ENCODE measurements at regions of chr9 and their contacts with region 1.

Region 1: DNA sequence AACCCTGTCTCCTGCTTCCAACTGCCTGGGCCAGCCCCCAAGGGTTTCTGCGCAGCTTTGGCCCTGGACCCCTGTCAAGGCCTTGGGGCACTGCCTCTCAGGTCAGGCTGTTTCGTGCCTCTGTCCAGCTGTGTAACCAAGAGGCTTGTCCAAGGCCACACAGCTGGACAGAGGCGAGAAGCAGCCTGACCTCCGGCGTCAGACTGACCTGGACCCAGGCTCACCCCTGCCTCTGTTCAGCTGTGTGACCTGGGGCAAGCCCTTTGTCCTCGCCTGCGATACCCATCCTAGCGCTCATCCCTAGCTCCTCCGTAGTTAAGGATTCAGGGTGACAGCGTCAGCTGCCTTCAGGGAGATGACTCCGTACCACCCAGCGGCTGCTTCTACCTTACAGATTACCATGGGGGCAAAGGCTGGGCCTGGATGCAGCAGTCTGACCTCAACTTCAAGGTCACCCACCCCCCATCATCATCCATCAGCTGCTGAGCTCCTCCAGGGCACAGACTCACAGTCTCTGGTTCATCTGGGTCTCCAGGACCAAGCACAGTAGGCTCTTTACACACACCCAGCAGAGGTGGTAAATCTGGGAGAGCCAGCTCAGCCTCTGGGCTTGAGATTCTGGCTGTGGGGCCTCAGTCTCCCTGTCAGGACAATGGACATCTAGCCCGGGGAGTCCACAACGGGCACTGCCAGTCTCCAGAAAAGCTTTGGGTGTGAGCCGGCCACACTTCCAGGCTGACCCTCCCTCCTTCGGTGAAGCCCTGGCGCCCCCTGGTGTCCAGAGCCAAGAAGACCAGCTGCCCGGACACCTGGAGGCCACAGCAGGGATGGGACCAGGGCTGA is 7.9 kb downstream of the AK1 start:
- DNase-seq: peak; percentile 81 to 96
- ATAC-seq: peak; percentile 88 to 97
- H3K4me3 ChIP-seq: no peak overlapping the region
- H3K27ac ChIP-seq: peak overlapping the region in 1 of 2 experiments; percentile 45; a peak in 1 of 6 replicates
- H3K4me1 ChIP-seq: peaks cover 7% of the 10 kb centered on the region
- CTCF ChIP-seq: peak; percentile 82
- EP300 ChIP-seq: no peak
- POLR2A ChIP-seq: no peak
- RAD21 ChIP-seq: peak; percentile 89 to 96

Region 2: DNA sequence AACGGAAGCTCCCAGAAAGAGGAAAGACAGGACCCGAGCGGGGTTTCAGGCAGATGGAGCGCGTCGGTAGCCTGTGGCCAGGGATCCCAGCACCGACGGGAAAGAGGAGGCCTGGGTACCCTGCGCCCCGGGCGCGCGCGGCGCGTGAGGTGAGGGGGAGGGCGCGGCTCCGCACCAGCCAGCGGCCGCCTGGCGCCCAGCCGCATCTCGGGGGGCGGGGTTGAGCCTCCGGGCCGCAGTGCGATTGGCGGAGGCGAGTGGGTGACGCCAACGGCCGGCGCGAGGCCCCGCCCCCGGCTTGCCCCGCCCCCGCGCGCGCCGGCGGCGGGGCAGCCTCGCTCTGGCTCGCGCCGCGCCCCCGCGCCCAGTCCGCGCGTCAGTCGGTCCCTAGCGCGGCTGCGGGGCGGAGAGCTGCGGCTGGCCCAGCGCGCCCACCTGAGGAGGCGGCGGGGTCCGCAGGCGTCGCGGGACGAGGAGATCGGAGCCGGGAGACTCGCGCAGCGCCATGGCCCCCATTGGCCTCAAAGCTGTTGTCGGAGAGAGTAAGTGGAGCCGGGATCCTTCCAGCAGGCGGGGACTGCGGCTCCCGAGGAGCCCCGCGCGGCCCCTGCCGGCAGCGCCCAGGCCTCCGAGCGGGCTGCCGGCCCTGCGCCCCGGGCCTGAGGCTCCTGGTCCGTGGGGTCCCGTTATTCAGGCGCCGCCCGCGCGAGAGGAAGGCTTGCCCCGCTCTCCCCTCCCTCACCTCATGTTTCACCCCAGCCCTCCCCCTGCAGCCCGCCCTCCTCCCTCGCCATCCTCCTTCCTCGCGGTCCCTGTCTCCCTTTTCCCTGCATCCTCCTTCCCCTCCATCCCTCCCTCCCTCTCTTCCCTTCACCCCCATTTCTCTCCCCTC is 257.4 kb before region 1 on chr9 and contains the start of gene STXBP1:
- CTCF ChIA-PET with region 1: interaction called, 10 read pairs
- POLR2A ChIA-PET with region 1: interaction called, 3 read pairs
- DNase-seq: peak; percentile 81 to 84
- ATAC-seq: peak; percentile 72 to 74
- H3K4me3 ChIP-seq: peak within 1 kb of the TSS; percentile 77
- H3K27ac ChIP-seq: peak within 1 kb of the TSS; percentile 73 to 96
- H3K4me1 ChIP-seq: peaks cover 23% of the 10 kb centered on the region
- CTCF ChIP-seq: 0 out of 3 replicates have a peak, but pooled peaks have one; percentile 10
- EP300 ChIP-seq: no peak
- POLR2A ChIP-seq: peak; percentile 59
- RAD21 ChIP-seq: no peak
- polyA plus RNA-seq, gene STXBP1: 13.3 and 20.4 TPM in 2 replicates

Region 3: GRCh38 chr9:127754099-127755050 is 115.2 kb before region 1 on chr9:
- CTCF ChIA-PET with region 1: interaction called, 12 read pairs
- POLR2A ChIA-PET with region 1: no interaction called
- DNase-seq: peak; percentile 38 to 82
- ATAC-seq: peak; percentile 78 to 93; a peak in 5 of 6 replicates
- H3K4me3 ChIP-seq: peak overlapping the region; percentile 45
- H3K27ac ChIP-seq: peak overlapping the region in 1 of 2 experiments; percentile 54; a peak in 2 of 6 replicates
- H3K4me1 ChIP-seq: peaks cover 14% of the 10 kb centered on the region
- CTCF ChIP-seq: no peak
- EP300 ChIP-seq: no peak
- POLR2A ChIP-seq: no peak
- RAD21 ChIP-seq: no peak

Region 4: GRCh38 chr9:127796899-127797370 is 72.6 kb before region 1 on chr9:
- CTCF ChIA-PET with region 1: interaction called, 18 read pairs
- POLR2A ChIA-PET with region 1: interaction called, 3 read pairs
- DNase-seq: no peak
- ATAC-seq: no peak; a peak in 1 of 6 replicates
- H3K4me3 ChIP-seq: no peak overlapping the region
- H3K27ac ChIP-seq: no peak overlapping the region
- H3K4me1 ChIP-seq: peaks cover 33% of the 10 kb centered on the region
- CTCF ChIP-seq: no peak
- EP300 ChIP-seq: no peak
- POLR2A ChIP-seq: no peak
- RAD21 ChIP-seq: no peak

Region 5: DNA sequence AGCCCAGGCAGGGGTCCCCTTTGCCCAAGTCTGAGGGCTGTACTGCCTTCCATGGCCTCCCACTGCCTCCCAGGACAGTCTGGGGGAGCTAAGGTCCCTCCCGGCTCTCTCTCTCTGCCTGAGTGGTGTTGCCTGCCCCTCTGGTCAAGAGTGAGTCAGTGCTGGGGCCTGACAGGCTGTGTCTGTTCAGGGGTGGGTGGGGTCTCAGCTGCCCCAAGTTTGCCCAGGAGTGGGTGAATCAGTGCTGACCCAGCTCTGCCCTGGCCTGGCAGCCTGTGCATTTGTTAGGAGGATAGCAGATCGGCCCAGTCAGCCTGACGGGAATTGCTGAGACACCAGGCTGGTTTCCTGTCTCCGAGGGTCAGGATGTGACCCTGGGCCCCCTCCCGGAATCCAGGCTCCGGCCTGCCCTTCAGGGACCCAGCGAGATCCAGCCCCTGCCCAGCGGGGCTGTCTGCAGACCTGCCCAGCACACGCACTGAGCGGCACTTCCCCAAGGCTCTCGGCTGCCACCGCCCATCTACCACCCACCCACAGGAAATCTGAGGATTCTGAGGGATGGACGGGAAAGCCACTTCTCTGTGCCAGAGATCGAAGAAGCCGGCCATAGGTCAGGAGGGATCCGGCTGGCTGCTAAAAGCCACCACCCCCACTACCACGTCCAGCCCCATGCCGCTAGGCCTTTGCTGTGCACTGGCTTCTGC is 31.0 kb before region 1 on chr9:
- CTCF ChIA-PET with region 1: interaction called, 60 read pairs
- POLR2A ChIA-PET with region 1: no interaction called
- DNase-seq: peak; percentile 26 to 51
- ATAC-seq: peak; percentile 72 to 92
- H3K4me3 ChIP-seq: no peak overlapping the region
- H3K27ac ChIP-seq: peak overlapping the region; percentile 33 to 68; a peak in 4 of 6 replicates
- H3K4me1 ChIP-seq: peaks cover 12% of the 10 kb centered on the region; the same call in 2 of the 3 replicates
- CTCF ChIP-seq: no peak
- EP300 ChIP-seq: no peak
- POLR2A ChIP-seq: no peak
- RAD21 ChIP-seq: no peak

Region 6: DNA sequence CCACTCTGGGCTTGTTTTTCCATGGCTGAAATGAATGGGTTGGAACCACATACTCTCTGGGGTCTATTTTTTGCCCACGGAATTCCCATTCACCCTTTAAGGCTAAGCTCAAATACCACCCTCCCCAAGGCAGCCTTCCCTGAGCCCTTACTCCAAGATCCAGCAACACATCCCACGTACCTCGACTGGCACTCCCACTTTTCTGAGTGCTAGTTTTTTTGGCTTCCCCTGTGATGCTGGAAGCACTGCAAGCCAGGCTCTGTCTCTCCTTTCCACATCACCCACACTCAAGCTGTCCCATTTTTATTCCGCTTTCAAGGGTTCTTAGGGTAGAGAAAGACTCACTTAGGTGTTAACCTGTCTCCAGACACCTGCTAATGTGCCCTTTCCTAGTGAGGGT is 23.9 kb after region 1 on chr9:
- CTCF ChIA-PET with region 1: interaction called, 50 read pairs
- POLR2A ChIA-PET with region 1: no interaction called
- DNase-seq: no peak
- ATAC-seq: no peak
- H3K4me3 ChIP-seq: no peak overlapping the region
- H3K27ac ChIP-seq: no peak overlapping the region
- H3K4me1 ChIP-seq: 0 out of 3 replicates have a peak, but pooled peaks cover 2% of the 10 kb centered on the region
- CTCF ChIP-seq: no peak
- EP300 ChIP-seq: no peak
- POLR2A ChIP-seq: no peak
- RAD21 ChIP-seq: no peak

Region 7: DNA sequence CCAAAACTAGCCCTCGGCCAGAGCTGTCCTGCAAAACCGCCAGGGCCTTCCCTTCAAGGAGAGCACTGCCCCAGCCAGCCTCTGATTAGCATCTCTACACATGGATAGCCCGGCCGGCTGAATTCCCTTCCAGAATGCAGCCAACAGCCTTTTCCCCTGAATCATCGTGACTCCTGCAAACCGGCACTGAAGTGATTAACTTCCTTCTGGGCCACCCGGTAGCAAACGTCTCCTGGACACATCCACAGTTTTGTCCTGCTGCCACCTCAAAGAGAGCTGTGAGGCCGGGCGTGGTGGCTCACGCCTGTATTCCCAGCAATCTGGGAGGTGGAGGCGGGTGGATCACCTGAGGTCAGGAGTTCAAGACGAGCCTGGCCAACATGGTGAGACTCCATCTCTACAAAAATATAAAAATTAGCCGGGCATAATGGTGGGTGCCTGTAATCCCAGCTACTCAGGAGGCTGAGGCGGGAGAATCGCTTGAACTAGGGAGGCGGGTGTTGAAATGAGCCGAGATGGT is 132.3 kb after region 1 on chr9:
- CTCF ChIA-PET with region 1: no interaction called
- POLR2A ChIA-PET with region 1: no interaction called
- DNase-seq: peak; percentile 80 to 96
- ATAC-seq: peak; percentile 94 to 97
- H3K4me3 ChIP-seq: no peak overlapping the region
- H3K27ac ChIP-seq: peak overlapping the region; percentile 90 to 91
- H3K4me1 ChIP-seq: peaks cover 42% of the 10 kb centered on the region
- CTCF ChIP-seq: no peak
- EP300 ChIP-seq: peak; percentile 29 to 53; a peak in 2 of 5 replicates
- POLR2A ChIP-seq: peak; percentile 19; the same call in 1 of the 2 replicates
- RAD21 ChIP-seq: peak in 1 of 2 experiments; percentile 35; a peak in 2 of 5 replicates

Region 8: GRCh38 chr9:128455849-128456612 is 586.5 kb after region 1 on chr9 and contains the start of gene ODF2:
- CTCF ChIA-PET with region 1: no interaction called
- POLR2A ChIA-PET with region 1: no interaction called
- DNase-seq: peak; percentile 96 to 98
- ATAC-seq: peak; percentile 89
- H3K4me3 ChIP-seq: peak within 1 kb of the TSS; percentile 100
- H3K27ac ChIP-seq: peak within 1 kb of the TSS; percentile 89 to 95
- H3K4me1 ChIP-seq: peaks cover 9% of the 10 kb centered on the region
- CTCF ChIP-seq: no peak
- EP300 ChIP-seq: no peak
- POLR2A ChIP-seq: peak; percentile 55
- RAD21 ChIP-seq: no peak
- polyA plus RNA-seq, gene ODF2: 22.9 and 24.7 TPM in 2 replicates

Measured in A549 (cell line).